ENCODE measurements at regions of chr4 and their contacts with region 1.

Region 1: DNA sequence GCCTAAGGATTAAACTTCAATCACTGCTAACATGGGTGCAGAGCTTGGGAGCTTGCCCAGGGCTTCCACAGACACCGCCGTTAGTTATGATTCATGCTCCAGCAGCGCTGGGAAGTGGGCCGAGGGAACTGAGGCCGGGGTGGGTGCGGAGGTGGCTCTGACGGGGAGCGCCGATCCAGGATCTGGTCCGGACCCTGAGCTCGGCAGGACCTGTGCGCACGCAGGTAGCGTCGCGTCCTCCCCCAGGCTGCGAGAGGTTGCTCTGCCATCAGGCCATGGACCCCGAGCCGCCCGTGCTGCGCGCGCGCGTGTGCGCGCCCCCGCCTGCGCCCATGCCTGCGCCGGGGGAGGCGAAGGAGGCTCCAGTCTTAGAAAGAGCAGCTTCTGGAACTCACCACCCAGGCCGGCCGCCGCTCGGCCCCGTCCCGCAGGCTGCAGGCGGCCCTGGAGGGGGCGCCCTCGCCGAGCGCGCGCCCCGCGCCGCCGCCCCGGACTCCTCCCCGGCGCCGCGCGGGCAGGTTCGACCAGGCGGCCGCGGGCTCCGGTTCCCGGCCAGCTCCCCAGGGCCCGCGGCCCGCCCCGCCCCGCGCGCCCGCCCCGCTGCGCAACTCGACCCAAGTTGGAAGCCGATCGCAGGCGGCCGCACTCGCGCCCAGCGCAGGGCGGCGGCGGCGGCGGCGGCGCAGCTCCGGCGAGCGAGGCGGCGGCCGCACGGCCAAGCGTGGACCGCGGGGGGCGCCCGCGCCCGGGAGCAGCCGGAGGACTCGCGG is 729 bp upstream of the ADRA2C start:
- DNase-seq: no peak

Region 2: GRCh38 chr4:3531879-3532713 is 233.4 kb before region 1 on chr4 and contains the start of gene LRPAP1:
- intact Hi-C with region 1: loop called in 1 of 2 experiments (anchors 5 kb)
- DNase-seq: peak; percentile 97
- total RNA-seq, gene LRPAP1: 97.9 to 147 TPM

Region 3: DNA sequence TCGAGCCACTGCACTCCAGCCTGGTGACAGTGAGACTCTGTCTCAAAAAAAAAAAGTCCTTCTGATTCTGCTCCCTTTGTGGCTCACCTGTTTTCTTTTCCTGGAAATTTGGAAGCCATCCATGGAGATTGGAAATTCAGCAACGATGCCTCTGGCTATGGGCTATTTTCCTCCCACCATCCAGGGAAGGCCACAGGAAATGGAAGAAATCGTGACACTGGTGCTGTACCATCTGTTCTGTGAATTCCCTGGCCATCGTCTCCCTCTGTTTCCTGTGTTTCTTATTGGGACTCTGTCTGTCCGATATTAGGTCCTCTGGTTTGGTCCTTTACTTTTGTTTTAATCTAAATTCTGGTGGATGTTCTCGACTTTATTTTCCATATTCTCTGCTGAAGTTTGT is 28.6 kb before region 1 on chr4:
- intact Hi-C with region 1: loop called in 1 of 2 experiments (anchors 2 kb)
- DNase-seq: no peak

Region 4: GRCh38 chr4:3791978-3792542 is 26.6 kb after region 1 on chr4:
- intact Hi-C with region 1: no loop called
- DNase-seq: no peak

Region 5: GRCh38 chr4:3880615-3881120 is 115.2 kb after region 1 on chr4:
- intact Hi-C with region 1: loop called in 1 of 2 experiments (anchors 10 kb)
- DNase-seq: no peak

Measured in posterior vena cava (tissue), 2 donors.